BJ (cell line): ENCODE measurements at regions of chr14 and their contacts with region 1.

Region 1: GRCh38 chr14:77301103-77301502 is 19.6 kb downstream of the POMT2 start:
- DNase-seq: no peak
- H3K4me3 ChIP-seq: no peak overlapping the region
- H3K27me3 ChIP-seq: no peaks in the 10 kb centered on the region
- CTCF ChIP-seq: peak; percentile 90

Region 2: DNA sequence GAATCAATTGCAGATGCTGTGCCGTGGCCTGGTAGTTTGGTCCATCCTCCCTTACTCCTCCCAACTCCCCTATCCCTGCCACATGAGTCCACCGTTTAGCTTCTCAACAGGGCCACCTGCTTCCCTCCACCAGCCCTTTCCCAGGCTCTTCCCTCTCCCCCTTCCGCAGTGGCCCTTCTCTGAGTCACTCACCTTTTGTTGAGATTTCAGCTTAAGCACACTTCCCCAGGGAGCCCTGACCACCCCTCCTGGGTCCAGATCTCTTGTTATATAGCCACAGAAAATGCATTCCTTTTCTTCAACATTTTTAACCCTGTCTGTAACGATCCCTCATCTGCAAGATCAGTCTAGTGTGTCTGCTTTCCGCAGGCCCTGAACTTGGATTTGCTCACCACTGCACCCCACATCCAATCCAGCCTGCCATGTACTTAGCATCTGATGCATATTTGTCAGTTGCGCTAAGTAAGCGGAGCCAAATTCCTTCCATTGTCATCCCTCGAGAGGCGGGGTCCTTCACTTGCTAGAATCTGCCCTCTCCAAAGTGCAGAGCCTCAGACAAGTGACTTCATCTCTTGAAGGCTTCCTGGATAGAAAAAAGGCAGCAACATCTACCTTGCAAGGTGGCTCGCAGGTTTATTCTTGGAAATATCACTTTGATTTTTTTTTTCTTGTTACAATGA is 78.4 kb before region 1 on chr14:
- CTCF ChIA-PET with region 1: no interaction called
- POLR2A ChIA-PET with region 1: no interaction called
- DNase-seq: no peak
- H3K4me3 ChIP-seq: no peak overlapping the region
- H3K27me3 ChIP-seq: peaks cover 4% of the 10 kb centered on the region; the same call in 1 of the 2 replicates
- CTCF ChIP-seq: no peak

Region 3: GRCh38 chr14:77284466-77284865 is 16.6 kb before region 1 on chr14:
- CTCF ChIA-PET with region 1: interaction called, 37 read pairs
- POLR2A ChIA-PET with region 1: no interaction called
- DNase-seq: no peak
- H3K4me3 ChIP-seq: no peak overlapping the region
- H3K27me3 ChIP-seq: no peaks in the 10 kb centered on the region
- CTCF ChIP-seq: no peak

Region 4: DNA sequence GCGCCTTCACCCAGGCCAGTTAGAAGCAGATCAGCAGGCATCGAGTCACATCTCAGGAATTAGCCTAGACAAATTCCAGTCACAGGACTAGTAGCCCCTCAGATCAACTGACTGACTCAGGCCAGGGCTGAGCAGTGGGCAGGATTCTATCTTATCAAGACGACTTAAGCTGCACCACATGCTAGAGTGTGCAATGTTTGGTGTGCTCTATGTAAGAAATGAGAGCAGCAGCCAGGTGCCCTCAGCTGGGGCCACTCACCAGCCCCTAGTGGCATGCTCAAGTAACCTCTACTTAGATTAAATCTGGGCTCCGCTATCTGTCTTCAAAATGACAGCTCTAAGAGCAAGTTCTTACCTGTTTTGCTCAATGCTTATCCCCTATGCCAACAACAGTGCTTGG is 10.4 kb before region 1 on chr14:
- CTCF ChIA-PET with region 1: interaction called, 37 read pairs
- POLR2A ChIA-PET with region 1: no interaction called
- DNase-seq: no peak
- H3K4me3 ChIP-seq: no peak overlapping the region
- H3K27me3 ChIP-seq: no peaks in the 10 kb centered on the region
- CTCF ChIP-seq: no peak

Region 5: GRCh38 chr14:77320238-77320935 is 19.3 kb after region 1 on chr14 and contains the start of gene POMT2:
- CTCF ChIA-PET with region 1: interaction called, 426 read pairs
- POLR2A ChIA-PET with region 1: interaction called, 6 read pairs
- DNase-seq: no peak
- H3K4me3 ChIP-seq: peak within 1 kb of the TSS; percentile 69
- H3K27me3 ChIP-seq: no peaks in the 10 kb centered on the region
- CTCF ChIP-seq: peak; percentile 4; the same call in 1 of the 2 replicates
- polyA plus RNA-seq, gene POMT2: 17.4 and 23.3 TPM in 2 replicates

Region 6: DNA sequence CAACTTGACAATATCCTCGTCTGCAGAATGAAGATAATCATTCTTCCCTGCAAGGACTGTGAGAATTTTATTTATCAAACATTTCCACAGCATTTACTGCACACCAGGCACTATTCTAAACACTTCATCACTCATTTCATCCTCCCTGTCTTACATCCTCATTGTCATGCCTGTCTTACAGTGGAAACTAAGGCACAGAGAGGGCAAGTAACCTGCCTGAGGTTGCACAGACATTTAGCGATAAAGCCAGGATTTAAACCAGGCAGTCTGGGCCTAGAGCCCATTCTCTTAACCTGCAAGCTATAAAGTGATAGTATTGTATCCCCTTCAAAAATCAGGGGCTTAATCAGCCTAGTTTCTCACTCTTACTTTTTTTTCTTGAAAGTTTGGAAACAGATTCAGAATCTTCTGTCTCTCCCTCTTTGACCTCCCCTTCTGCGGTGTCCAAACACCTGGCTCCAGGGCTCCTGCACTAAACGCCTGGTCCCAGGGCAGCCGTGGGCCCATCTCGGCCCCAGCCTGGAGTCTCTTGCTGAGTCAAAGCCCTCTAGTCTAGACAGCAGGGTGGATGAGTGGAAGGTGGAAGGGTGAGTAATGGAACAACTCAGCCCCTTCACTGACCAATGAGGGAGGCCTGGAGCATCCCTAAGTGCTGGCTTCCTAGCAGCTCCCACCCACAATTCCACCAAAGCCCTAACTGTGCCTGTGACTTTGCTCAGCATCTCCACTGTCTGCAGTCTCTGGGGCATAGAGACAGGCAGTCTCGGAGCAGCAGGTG is 185.0 kb after region 1 on chr14:
- CTCF ChIA-PET with region 1: no interaction called
- POLR2A ChIA-PET with region 1: no interaction called
- DNase-seq: no peak
- H3K4me3 ChIP-seq: no peak overlapping the region
- H3K27me3 ChIP-seq: peaks cover 2% of the 10 kb centered on the region; the same call in 1 of the 2 replicates
- CTCF ChIP-seq: no peak